Right ventricle myocardium superior (tissue), 1 donor: ENCODE measurements at regions of chr15 and their contacts with region 1.

Region 1: GRCh38 chr15:64067564-64068030 is 21.3 kb upstream of the DAPK2 start:
- DNase-seq: peak; percentile 60
- ATAC-seq: peak; percentile 83

Region 2: GRCh38 chr15:63752075-63752684 is 315.4 kb before region 1 on chr15:
- intact Hi-C with region 1: loop called (anchors 5 kb)
- DNase-seq: no peak
- ATAC-seq: peak; percentile 88